Naive thymus-derived CD4-positive, alpha-beta T cell (primary cell): ENCODE measurements at regions of chr9 and their contacts with region 1.

Region 1: GRCh38 chr9:34010979-34011378 is 37.7 kb downstream of the UBAP2 start:
- DNase-seq: peak in 6 of 9 donors; percentile 7 to 37 (median 14)
- ATAC-seq: no peak
- H3K4me3 ChIP-seq: no peak overlapping the region
- H3K4me3 Mint-ChIP-seq: no peak overlapping the region
- H3K27ac ChIP-seq: no peak overlapping the region
- H3K27ac Mint-ChIP-seq: no peak overlapping the region
- H3K4me1 ChIP-seq: no peaks in the 10 kb centered on the region
- H3K4me1 Mint-ChIP-seq: peaks cover 0 to 4% (median 0%) of the 10 kb centered on the region in 7 donors
- H3K27me3 ChIP-seq: no peaks in the 10 kb centered on the region
- H3K27me3 Mint-ChIP-seq: no peaks in the 10 kb centered on the region

Region 2: DNA sequence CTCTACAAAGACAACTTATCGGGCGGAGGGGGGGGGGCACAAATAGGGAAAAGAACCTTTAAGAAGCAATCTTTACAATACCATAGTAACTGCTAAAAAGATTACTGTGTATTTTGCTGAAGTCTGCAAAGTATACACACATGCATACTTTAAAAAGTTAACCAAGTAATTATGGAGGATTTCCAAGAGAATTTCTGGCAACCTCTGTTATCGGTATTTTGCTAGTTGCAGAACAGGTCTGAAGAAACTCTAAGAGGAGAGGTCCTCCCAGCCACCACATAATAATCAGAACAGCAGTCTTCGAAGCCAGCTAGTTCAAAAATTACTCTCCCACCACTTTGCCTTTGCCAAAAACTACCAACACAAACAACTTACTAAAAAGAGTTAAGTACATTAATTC is 18.3 kb before region 1 on chr9:
- CTCF ChIA-PET with region 1: no interaction called
- POLR2A ChIA-PET with region 1: no interaction called
- intact Hi-C with region 1: no loop called
- DNase-seq: no peak
- ATAC-seq: no peak
- H3K4me3 ChIP-seq: no peak overlapping the region
- H3K4me3 Mint-ChIP-seq: no peak overlapping the region
- H3K27ac ChIP-seq: no peak overlapping the region
- H3K27ac Mint-ChIP-seq: no peak overlapping the region
- H3K4me1 ChIP-seq: no peaks in the 10 kb centered on the region
- H3K4me1 Mint-ChIP-seq: peaks cover 0 to 8% (median 0%) of the 10 kb centered on the region in 7 donors
- H3K27me3 ChIP-seq: no peaks in the 10 kb centered on the region
- H3K27me3 Mint-ChIP-seq: no peaks in the 10 kb centered on the region

Region 3: DNA sequence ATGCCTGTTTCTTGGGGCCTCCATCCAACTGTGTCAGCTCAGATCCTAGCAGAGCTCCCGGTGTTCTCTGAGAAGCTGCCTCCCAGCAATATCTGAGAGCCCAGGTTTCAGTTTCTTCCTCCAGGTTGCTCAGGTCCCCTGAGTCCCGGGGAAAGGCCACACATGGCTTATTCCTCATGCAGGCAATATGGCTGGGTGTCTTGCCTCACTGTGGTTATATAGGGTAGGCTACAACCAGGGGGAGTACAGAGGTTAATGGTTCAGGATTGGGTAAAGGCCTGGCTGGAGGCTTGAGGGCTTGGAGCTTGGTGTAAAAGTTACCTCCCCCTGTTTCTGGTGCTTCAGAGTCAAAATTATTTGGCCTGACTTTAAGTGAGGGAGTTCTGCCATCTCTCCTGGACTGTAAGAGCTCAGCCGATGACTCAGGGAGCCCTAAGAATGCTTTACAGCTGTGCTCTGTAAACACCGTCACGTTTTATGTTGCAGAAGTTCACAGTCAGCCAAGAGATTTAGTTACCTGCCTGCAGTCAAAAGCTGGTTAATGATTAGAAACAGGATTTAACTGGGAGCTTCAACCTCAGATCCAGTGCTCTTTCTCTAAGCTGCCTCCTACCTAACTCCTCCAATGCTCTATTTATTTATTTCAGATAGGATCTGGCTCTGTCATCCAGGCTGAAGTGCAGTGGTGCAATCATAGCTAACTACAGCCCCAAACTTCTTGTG is 62.0 kb after region 1 on chr9:
- CTCF ChIA-PET with region 1: no interaction called
- POLR2A ChIA-PET with region 1: no interaction called
- intact Hi-C with region 1: loop called (anchors 1 kb)
- DNase-seq: no peak
- ATAC-seq: no peak
- H3K4me3 ChIP-seq: no peak overlapping the region
- H3K4me3 Mint-ChIP-seq: no peak overlapping the region
- H3K27ac ChIP-seq: no peak overlapping the region
- H3K27ac Mint-ChIP-seq: peak overlapping the region in 3 of 9 donors; percentile 28 to 62 (median 45)
- H3K4me1 ChIP-seq: no peaks in the 10 kb centered on the region
- H3K4me1 Mint-ChIP-seq: peaks cover 0 to 12% (median 0%) of the 10 kb centered on the region in 7 donors
- H3K27me3 ChIP-seq: no peaks in the 10 kb centered on the region
- H3K27me3 Mint-ChIP-seq: no peaks in the 10 kb centered on the region

Region 4: GRCh38 chr9:34158362-34158869 is 147.4 kb after region 1 on chr9:
- CTCF ChIA-PET with region 1: no interaction called
- POLR2A ChIA-PET with region 1: no interaction called
- intact Hi-C with region 1: loop called in 1 of 2 experiments (anchors 1 kb)
- DNase-seq: no peak
- ATAC-seq: no peak
- H3K4me3 ChIP-seq: no peak overlapping the region
- H3K4me3 Mint-ChIP-seq: no peak overlapping the region
- H3K27ac ChIP-seq: no peak overlapping the region
- H3K27ac Mint-ChIP-seq: no peak overlapping the region
- H3K4me1 ChIP-seq: no peaks in the 10 kb centered on the region
- H3K4me1 Mint-ChIP-seq: no peaks in the 10 kb centered on the region
- H3K27me3 ChIP-seq: no peaks in the 10 kb centered on the region
- H3K27me3 Mint-ChIP-seq: peaks cover 0 to 9% (median 0%) of the 10 kb centered on the region in 5 donors

Region 5: DNA sequence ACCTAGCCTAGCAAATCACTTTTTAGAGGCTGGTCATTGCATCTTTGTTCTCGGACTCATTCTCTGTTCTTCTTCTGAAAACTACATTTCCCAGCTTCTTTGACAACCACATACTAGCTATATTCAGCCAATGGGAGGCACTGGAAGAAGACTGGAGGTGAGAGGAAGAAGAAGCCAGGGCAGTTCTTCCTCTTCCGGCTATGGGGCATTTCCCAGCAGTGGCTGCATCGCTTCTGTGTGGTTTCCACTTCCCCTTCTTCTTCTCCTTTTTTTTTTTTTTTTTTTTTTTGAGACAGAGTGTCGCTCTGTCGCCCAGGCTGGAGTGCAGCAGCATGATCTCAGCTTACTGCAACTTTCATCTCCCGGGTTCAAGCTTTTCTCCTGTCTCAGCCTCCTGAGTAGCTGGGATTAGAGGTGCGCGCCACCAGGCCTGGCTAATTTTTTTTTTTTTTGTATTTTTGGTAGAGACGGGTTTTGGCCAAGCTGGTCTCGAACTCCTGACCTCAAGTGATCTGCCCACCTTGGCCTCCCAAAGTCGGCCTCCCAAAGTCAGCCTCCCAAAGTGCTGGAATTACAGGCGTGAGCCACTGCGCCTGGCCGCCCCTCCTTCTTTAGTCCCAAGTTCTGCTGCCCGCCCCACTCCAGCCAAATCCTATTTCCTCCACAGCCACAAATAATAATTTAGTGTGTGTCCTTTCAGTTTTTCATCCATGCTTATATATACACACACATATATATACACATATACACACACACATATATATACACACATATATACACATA is 161.0 kb after region 1 on chr9:
- CTCF ChIA-PET with region 1: interaction called, 13 read pairs
- POLR2A ChIA-PET with region 1: no interaction called
- intact Hi-C with region 1: no loop called
- DNase-seq: peak in 7 of 9 donors; percentile 36 to 80 (median 65)
- ATAC-seq: peak; percentile 99
- H3K4me3 ChIP-seq: peak overlapping the region; percentile 28
- H3K4me3 Mint-ChIP-seq: peak overlapping the region; percentile 41 to 89 (median 70)
- H3K27ac ChIP-seq: peak overlapping the region; percentile 26
- H3K27ac Mint-ChIP-seq: peak overlapping the region; percentile 55 to 92 (median 85)
- H3K4me1 ChIP-seq: peaks cover 0 to 8% of the 10 kb centered on the region in 2 donors
- H3K4me1 Mint-ChIP-seq: peaks cover 5 to 19% (median 13%) of the 10 kb centered on the region in 7 donors
- H3K27me3 ChIP-seq: no peaks in the 10 kb centered on the region
- H3K27me3 Mint-ChIP-seq: no peaks in the 10 kb centered on the region

Region 6: GRCh38 chr9:34252670-34253459 is 241.9 kb after region 1 on chr9:
- CTCF ChIA-PET with region 1: no interaction called
- POLR2A ChIA-PET with region 1: no interaction called
- intact Hi-C with region 1: loop called in 1 of 2 experiments (anchors 1 kb)
- DNase-seq: peak; percentile 38 to 70 (median 56)
- ATAC-seq: peak; percentile 85
- H3K4me3 ChIP-seq: no peak overlapping the region
- H3K4me3 Mint-ChIP-seq: no peak overlapping the region
- H3K27ac ChIP-seq: no peak overlapping the region
- H3K27ac Mint-ChIP-seq: peak overlapping the region in 7 of 9 donors; percentile 15 to 69 (median 46)
- H3K4me1 ChIP-seq: peaks cover 0 to 6% of the 10 kb centered on the region in 2 donors
- H3K4me1 Mint-ChIP-seq: peaks cover 9 to 21% (median 17%) of the 10 kb centered on the region in 7 donors
- H3K27me3 ChIP-seq: no peaks in the 10 kb centered on the region
- H3K27me3 Mint-ChIP-seq: no peaks in the 10 kb centered on the region